ACHN (cell line): ENCODE measurements at regions of chr12 and their contacts with region 1.

Region 1: GRCh38 chr12:9634177-9634803 is 26.6 kb upstream of the KLRB1 start:
- DNase-seq: peak; percentile 72

Region 2: DNA sequence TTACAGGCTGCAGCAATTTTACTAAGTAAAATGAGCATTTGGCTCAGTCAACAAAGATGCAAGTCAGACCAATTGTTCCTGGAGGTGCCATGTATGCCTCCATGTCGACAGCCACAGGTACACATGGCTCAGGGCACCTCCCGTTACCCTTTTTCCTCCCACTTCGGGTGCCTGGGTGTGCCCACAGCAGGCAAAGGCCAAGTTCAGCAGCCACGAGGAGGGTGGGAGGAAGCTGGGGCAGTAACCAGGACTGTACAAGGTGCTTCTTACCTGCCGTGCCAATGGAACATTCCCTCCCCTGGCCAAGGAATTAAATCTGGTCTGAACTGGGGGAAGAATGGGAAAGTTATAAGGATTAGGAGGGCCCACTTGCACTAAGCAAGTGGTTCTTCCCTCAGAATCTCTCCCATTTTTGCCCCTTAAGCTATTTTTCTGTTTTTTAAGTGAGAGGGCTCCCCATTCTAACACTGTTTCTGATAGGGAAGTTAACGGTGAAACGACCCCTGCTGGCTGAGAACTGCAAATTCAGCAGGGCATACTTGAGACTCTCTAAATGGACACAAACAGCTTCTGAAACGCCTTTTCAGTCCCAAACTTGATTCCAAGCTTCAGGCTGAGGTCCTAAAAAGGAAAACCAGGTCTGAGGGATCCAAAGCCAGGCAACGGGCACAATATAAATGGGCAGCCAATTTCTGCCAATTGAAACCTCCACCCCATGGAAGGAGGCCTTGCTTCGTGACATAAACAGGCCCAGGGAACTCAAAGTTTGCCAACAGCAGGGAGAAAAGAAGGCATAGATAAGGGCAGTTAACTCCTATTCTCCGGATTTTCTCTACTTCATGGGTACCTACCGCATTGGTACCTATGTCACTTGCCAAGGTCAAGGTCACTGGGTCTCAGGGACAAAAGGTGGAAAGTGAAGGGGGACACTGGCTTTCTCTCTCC is 73.8 kb after region 1 on chr12:
- in situ Hi-C with region 1: loop called (anchors 10 kb)
- DNase-seq: peak; percentile 67